Endothelial cell of umbilical vein (primary cell): ENCODE measurements at regions of chr10 and their contacts with region 1.

Region 1: DNA sequence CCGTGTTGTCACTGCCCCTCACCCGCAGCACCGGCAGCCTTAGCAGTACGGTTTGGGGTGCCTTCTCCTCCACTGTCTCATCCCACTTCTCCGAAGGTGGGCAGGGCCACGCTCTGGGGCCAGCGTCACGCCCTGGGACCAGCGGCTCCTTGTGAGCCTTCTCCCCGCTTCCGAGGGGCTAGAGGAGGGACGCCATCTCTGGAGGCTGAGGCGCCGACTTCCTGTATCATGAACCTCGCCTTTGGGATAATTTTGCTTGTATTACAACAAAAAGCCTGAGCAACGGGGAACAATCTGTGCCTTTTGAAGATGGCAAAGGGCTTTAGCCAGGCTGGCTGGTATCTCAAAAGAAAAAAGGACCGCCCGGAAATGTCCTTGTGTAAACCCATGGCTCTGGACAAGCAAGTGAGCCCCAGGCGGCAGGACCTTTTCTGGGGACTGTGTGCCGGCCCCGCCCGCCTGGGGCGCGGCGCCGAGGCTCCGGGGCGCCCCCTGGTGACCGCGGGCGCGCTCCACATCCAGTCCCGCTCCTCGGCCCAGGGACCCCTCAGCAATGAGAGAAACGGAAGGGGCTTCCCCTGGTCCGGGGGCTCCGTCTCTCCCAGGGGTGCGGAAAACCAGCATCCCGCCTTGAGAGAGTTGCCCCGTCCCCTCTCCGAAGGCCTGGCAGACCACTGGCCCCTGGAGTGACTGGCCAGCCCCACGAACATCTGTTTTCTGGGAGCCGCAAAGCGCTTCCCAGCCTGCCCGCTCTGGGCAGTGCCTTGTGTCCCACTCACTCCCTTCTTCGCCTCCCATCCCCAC is 3.8 kb downstream of the DEPP1 start:
- DNase-seq: peak; percentile 90
- H3K4me3 ChIP-seq: peak overlapping the region in 2 of 3 experiments; percentile 22 to 48
- H3K27ac ChIP-seq: peak overlapping the region; percentile 60
- H3K4me1 ChIP-seq: peaks cover 20% of the 10 kb centered on the region
- H3K27me3 ChIP-seq: no peaks in the 10 kb centered on the region
- CTCF ChIP-seq: peak; percentile 81 to 95
- POLR2A ChIP-seq: peak; percentile 60

Region 2: GRCh38 chr10:44878706-44879530 is 95.9 kb before region 1 on chr10:
- CTCF ChIA-PET with region 1: no interaction called
- POLR2A ChIA-PET with region 1: no interaction called
- dilution Hi-C with region 1: no loop called
- intact Hi-C with region 1: loop called (anchors 5 kb)
- DNase-seq: peak; percentile 80
- H3K4me3 ChIP-seq: peak overlapping the region in 2 of 3 experiments; percentile 14 to 35
- H3K27ac ChIP-seq: no peak overlapping the region
- H3K4me1 ChIP-seq: peaks cover 7% of the 10 kb centered on the region
- H3K27me3 ChIP-seq: peaks cover 2 to 3% of the 10 kb centered on the region in 2 experiments
- CTCF ChIP-seq: no peak
- POLR2A ChIP-seq: no peak

Region 3: DNA sequence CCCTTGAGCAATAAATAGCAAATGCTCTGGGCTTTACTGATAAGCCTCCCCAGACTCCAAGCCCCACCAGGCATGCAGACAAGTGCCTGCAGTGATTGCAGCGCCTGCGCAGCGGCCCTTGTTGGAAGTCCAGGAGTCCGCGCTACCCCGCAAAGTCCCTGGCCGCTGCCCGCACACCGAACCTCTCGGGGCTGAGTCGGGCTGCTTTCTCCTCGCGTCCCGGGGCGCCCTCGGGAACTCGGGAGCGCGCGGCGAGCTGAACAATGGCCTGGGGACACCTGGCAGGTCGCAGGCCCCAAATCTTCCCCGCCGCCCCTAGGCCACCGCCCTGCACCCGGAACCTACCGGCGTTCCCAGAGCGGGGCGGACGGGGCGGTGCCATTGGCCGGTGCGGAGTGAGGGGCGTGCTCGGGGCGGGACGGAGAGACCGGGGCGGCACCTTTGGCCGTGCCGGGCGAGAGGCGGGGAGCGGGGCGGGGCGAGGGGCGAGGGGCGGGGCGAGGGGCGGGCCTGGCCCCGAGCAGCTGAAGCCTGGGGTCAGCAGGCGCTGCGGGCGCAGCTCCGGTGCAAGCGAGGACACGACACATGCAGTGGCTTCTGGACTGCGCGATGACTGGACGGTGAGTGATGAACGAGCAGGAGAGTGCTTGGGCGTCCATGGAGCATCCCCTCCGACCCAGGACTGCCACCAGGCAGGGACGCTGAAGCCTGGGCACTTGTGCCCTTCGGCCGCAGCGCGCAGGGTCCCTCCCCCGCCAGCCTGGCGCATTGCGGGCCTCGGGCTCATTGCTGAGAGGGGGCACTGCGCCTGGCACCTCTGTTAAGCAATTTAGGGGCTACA is 15.4 kb before region 1 on chr10 and contains the start of gene RASSF4:
- CTCF ChIA-PET with region 1: interaction called, 12 read pairs
- POLR2A ChIA-PET with region 1: interaction called, 8 read pairs
- dilution Hi-C with region 1: no loop called
- intact Hi-C with region 1: loop called (anchors 1 kb)
- DNase-seq: peak; percentile 90
- H3K4me3 ChIP-seq: peak within 1 kb of the TSS; percentile 40 to 85 (median 74)
- H3K27ac ChIP-seq: peak within 1 kb of the TSS; percentile 57
- H3K4me1 ChIP-seq: peaks cover 11% of the 10 kb centered on the region
- H3K27me3 ChIP-seq: no peaks in the 10 kb centered on the region
- CTCF ChIP-seq: no peak
- POLR2A ChIP-seq: peak; percentile 82
- total RNA-seq, gene RASSF4: 4.6 and 7.6 TPM in 2 replicates

Region 4: DNA sequence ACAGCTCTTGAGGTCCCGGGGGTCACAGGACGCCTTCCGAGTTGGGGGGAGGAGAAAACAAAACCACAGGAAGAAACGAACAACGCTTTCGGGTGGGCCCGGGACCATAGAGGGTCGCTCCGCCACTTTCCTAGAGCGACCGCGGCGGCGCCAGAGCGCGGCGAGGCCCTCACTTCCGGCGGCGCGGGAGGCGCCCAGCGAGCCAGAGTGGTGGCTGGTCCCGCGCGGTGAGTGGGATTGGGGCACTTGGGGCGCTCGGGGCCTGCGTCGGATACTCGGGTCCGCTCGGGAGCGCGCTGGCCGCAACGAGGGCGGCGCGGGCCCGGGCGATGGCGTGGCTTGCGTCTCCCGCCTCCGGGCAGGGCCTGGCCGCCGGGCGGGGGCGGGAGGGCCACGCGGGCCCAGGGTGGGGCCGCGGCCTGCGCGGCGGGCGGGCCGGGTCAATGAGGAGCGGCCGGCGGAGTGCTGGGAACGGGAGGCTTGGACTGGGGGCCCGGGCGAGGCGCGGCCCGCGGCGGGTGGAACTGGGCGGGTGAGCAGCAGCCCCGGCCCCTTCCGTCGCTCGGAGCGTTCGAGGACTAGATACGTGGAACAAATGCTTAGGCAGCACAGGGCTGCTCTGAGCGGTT is 26.0 kb after region 1 on chr10 and contains the start of gene ZNF22:
- CTCF ChIA-PET with region 1: interaction called, 8 read pairs
- POLR2A ChIA-PET with region 1: interaction called, 48 read pairs
- dilution Hi-C with region 1: no loop called
- intact Hi-C with region 1: loop called (anchors 1 kb)
- DNase-seq: peak; percentile 75
- H3K4me3 ChIP-seq: peak within 1 kb of the TSS; percentile 34 to 86 (median 48)
- H3K27ac ChIP-seq: peak within 1 kb of the TSS; percentile 89
- H3K4me1 ChIP-seq: peaks cover 27% of the 10 kb centered on the region
- H3K27me3 ChIP-seq: no peaks in the 10 kb centered on the region
- CTCF ChIP-seq: peak in 1 of 2 donors; percentile 19
- POLR2A ChIP-seq: peak; percentile 80
- total RNA-seq, gene ZNF22: 45.0 and 48.7 TPM in 2 replicates

Region 5: GRCh38 chr10:45064998-45065397 is 90.2 kb after region 1 on chr10:
- CTCF ChIA-PET with region 1: no interaction called
- POLR2A ChIA-PET with region 1: no interaction called
- dilution Hi-C with region 1: no loop called
- intact Hi-C with region 1: no loop called
- DNase-seq: no peak
- H3K4me3 ChIP-seq: no peak overlapping the region
- H3K27ac ChIP-seq: no peak overlapping the region
- H3K4me1 ChIP-seq: no peaks in the 10 kb centered on the region
- H3K27me3 ChIP-seq: no peaks in the 10 kb centered on the region
- CTCF ChIP-seq: no peak
- POLR2A ChIP-seq: no peak